ENCODE measurements at regions of chr20 and their contacts with region 1.

Region 1: GRCh38 chr20:63415647-63416415 is 54.7 kb upstream of the CHRNA4 start:
- DNase-seq: no peak
- ATAC-seq: no peak
- H3K4me3 ChIP-seq: no peak overlapping the region
- H3K27ac ChIP-seq: no peak overlapping the region
- H3K4me1 ChIP-seq: no peaks in the 10 kb centered on the region
- H3K27me3 ChIP-seq: peaks cover 76 to 97% of the 10 kb centered on the region in 2 experiments
- CTCF ChIP-seq: no peak
- EP300 ChIP-seq: no peak
- POLR2A ChIP-seq: no peak
- RAD21 ChIP-seq: no peak

Region 2: GRCh38 chr20:63360850-63361518 is 54.8 kb before region 1 on chr20 and contains the start of gene CHRNA4:
- CTCF ChIA-PET with region 1: no interaction called
- POLR2A ChIA-PET with region 1: no interaction called
- in situ Hi-C with region 1: no loop called
- intact Hi-C with region 1: no loop called
- DNase-seq: no peak
- ATAC-seq: no peak
- H3K4me3 ChIP-seq: no peak within 1 kb of the TSS
- H3K27ac ChIP-seq: no peak within 1 kb of the TSS
- H3K4me1 ChIP-seq: peaks cover 35% of the 10 kb centered on the region
- H3K27me3 ChIP-seq: peaks cover 24 to 65% of the 10 kb centered on the region in 2 experiments
- CTCF ChIP-seq: no peak
- EP300 ChIP-seq: no peak
- POLR2A ChIP-seq: no peak
- RAD21 ChIP-seq: no peak
- total RNA-seq, gene CHRNA4: not detected in 2 replicates

Region 3: GRCh38 chr20:63427724-63428330 is 12.0 kb after region 1 on chr20:
- CTCF ChIA-PET with region 1: no interaction called
- POLR2A ChIA-PET with region 1: no interaction called
- in situ Hi-C with region 1: no loop called
- intact Hi-C with region 1: loop called (anchors 1 kb)
- DNase-seq: no peak
- ATAC-seq: no peak
- H3K4me3 ChIP-seq: no peak overlapping the region
- H3K27ac ChIP-seq: no peak overlapping the region
- H3K4me1 ChIP-seq: no peaks in the 10 kb centered on the region
- H3K27me3 ChIP-seq: peaks cover 32 to 86% of the 10 kb centered on the region in 2 experiments
- CTCF ChIP-seq: no peak
- EP300 ChIP-seq: no peak
- POLR2A ChIP-seq: no peak
- RAD21 ChIP-seq: no peak